Activated T-helper 2 cell treated with anti-CD3 and anti-CD28 coated beads, Interferon-gamma antibody, Interleukin-2, Interleukin-4, amounts not matched to agents 10 μg/mL and 5 μg/mL and 100 μg/mL, durations not matched to agents 14 hours and 24 hours and 36 hours (primary cell): ENCODE measurements at regions of chr15 and their contacts with region 1.

Region 1: DNA sequence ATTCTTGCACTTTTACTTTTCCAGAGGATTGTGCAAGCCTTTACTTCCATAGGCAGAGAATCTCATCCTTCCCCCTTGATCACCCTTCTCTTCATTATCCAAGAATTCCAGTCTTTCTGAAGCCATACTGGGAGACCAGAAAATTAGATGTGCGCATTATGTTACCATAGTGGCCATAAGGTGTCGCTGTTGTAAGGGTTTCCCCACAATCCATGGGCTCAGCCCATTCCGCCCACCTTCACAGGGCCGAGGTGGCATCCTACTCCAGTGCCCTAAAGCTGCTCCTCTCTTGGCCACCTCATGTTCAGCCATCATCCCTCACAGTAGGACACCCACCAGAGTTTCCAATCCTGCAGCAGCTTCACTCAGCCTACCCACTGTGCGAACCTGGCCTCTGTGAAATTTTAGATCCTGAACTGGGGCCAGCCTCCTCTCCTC is 35.0 kb downstream of the CTSH start:
- DNase-seq: no peak
- H3K4me3 Mint-ChIP-seq: no peak overlapping the region
- H3K27ac Mint-ChIP-seq: no peak overlapping the region
- H3K4me1 Mint-ChIP-seq: peaks cover 27% of the 10 kb centered on the region
- H3K27me3 Mint-ChIP-seq: no peaks in the 10 kb centered on the region

Region 2: GRCh38 chr15:78893538-78893937 is 16.3 kb before region 1 on chr15:
- intact Hi-C with region 1: no loop called
- DNase-seq: no peak
- H3K4me3 Mint-ChIP-seq: no peak overlapping the region
- H3K27ac Mint-ChIP-seq: peak overlapping the region; percentile 58
- H3K4me1 Mint-ChIP-seq: peaks cover 16% of the 10 kb centered on the region
- H3K27me3 Mint-ChIP-seq: no peaks in the 10 kb centered on the region

Region 3: GRCh38 chr15:78968539-78969271 is 58.9 kb after region 1 on chr15:
- intact Hi-C with region 1: no loop called
- DNase-seq: no peak
- H3K4me3 Mint-ChIP-seq: no peak overlapping the region
- H3K27ac Mint-ChIP-seq: no peak overlapping the region
- H3K4me1 Mint-ChIP-seq: no peaks in the 10 kb centered on the region
- H3K27me3 Mint-ChIP-seq: peaks cover 8% of the 10 kb centered on the region

Region 4: DNA sequence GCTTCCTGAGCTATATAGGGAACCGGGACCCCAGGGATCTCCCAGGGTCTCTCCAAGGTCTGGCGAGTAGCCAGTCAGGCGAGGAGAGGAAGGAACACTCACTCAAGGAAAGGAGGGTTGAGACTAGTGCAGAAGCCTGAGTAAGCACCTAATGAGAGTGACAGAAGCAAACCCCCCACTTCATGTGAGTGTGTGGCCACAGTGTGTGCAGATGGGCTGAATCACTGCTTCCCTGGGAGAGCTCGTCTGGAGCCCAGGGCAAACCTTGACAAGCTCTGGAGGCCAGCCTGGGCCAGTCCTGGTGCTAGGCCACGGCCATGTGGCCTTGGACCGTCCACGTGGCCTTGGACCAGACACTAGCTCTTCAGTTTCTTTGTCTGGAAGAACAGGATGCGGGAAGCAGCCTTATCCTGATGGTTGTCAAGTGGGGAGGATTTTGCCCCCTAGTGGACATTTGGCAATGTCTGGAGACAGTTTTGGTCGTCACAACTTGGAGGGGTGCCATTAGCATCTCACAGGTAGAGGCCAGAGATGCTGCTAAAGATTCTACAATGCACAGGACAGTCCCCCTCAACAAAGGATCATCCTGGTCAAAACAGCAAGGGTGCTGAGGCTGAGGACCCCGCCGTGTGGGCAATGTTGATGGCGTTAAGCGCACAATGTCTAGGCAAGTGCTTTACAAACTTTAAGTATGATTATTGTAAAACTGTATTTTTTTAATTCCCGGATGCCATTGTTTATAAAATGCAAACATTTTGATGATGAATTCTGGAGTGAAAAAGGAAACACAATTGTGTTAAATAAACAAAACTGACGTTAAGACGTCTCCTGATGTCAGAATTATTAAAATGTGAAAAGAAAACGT is 69.9 kb after region 1 on chr15:
- intact Hi-C with region 1: loop called (anchors 2 kb)
- DNase-seq: no peak
- H3K4me3 Mint-ChIP-seq: no peak overlapping the region
- H3K27ac Mint-ChIP-seq: no peak overlapping the region
- H3K4me1 Mint-ChIP-seq: peaks cover 8% of the 10 kb centered on the region
- H3K27me3 Mint-ChIP-seq: no peaks in the 10 kb centered on the region

Region 5: GRCh38 chr15:79007066-79007465 is 97.3 kb after region 1 on chr15:
- intact Hi-C with region 1: loop called (anchors 5 kb)
- DNase-seq: no peak
- H3K4me3 Mint-ChIP-seq: no peak overlapping the region
- H3K27ac Mint-ChIP-seq: no peak overlapping the region
- H3K4me1 Mint-ChIP-seq: peaks cover 14% of the 10 kb centered on the region
- H3K27me3 Mint-ChIP-seq: peaks cover 2% of the 10 kb centered on the region

Region 6: GRCh38 chr15:79184465-79184892 is 274.7 kb after region 1 on chr15:
- intact Hi-C with region 1: loop called (anchors 5 kb)
- DNase-seq: peak; percentile 40
- H3K4me3 Mint-ChIP-seq: no peak overlapping the region
- H3K27ac Mint-ChIP-seq: no peak overlapping the region
- H3K4me1 Mint-ChIP-seq: no peaks in the 10 kb centered on the region
- H3K27me3 Mint-ChIP-seq: no peaks in the 10 kb centered on the region